GM12878 (cell line): ENCODE measurements at regions of chr9 and their contacts with region 1.

Region 1: DNA sequence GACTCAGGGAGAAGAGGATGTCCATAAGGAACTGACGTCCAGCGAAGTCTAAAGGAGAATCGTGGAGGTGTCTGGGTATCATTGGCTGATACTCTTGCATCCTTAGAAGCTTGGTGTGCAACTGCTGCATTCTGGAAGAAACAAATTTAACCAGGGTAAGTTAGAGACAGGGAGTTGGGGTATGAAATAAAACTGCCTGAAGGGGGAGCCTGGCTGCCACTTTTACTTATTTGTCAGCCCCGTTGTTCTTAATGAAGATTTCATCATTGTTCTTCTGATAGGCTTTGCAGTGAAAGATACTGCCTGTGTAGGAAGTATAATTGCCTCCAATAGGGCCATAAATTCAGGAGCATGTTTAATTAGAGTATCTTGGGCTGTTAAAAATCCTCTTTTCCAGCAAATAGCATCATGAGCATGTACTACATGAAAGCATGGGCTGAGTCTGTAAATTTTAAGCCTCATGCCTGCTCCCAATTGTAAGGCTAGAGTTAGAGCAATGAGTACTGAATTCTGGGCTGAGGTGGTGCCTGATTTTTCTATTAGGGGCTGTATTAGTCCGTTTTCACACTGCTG is 1264.5 kb upstream of the ACO1 start:
- DNase-seq: no peak
- ATAC-seq: peak; percentile 78
- H3K4me3 ChIP-seq: no peak overlapping the region
- H3K27ac ChIP-seq: no peak overlapping the region
- H3K4me1 ChIP-seq: no peaks in the 10 kb centered on the region
- H3K27me3 ChIP-seq: no peaks in the 10 kb centered on the region
- CTCF ChIP-seq: peak; percentile 52 to 70 (median 52)
- EP300 ChIP-seq: no peak
- POLR2A ChIP-seq: no peak
- RAD21 ChIP-seq: peak; percentile 81

Region 2: GRCh38 chr9:31542384-31543055 is 422.6 kb after region 1 on chr9:
- CTCF ChIA-PET with region 1: interaction called, 5 read pairs
- POLR2A ChIA-PET with region 1: no interaction called
- RAD21 ChIA-PET with region 1: interaction called, 4 read pairs
- SMC1A ChIA-PET with region 1: interaction called, 3 read pairs
- in situ Hi-C with region 1: no loop called
- intact Hi-C with region 1: loop called (anchors 10 kb)
- DNase-seq: peak; percentile 26
- ATAC-seq: peak; percentile 99
- H3K4me3 ChIP-seq: no peak overlapping the region
- H3K27ac ChIP-seq: no peak overlapping the region
- H3K4me1 ChIP-seq: peaks cover 4% of the 10 kb centered on the region; the same call in 1 of the 2 replicates
- H3K27me3 ChIP-seq: no peaks in the 10 kb centered on the region
- CTCF ChIP-seq: peak; percentile 54 to 57 (median 56); a peak in 5 of 6 replicates
- EP300 ChIP-seq: peak; percentile 37 to 78; a peak in 2 of 4 replicates
- POLR2A ChIP-seq: no peak
- RAD21 ChIP-seq: peak; percentile 75

Region 3: DNA sequence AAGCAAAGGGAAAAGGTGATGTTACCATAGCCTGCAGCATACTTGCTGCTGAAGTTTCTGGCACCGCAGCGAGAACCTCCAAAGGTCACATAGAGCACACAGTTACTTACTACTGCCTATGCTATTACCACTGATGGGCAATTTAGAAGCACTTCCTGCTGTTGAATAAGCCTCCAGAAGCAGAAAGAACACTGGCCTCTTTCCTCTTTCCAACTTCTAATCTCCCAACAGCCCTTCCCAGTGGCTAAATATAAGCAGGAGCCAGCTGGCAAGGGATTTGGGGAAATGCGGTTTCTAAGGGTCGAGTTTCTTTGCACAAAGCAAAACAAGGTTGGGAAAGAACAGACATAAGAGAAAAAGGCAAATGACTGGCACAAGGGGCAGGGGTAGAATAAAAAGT is 595.3 kb after region 1 on chr9:
- CTCF ChIA-PET with region 1: no interaction called
- POLR2A ChIA-PET with region 1: no interaction called
- RAD21 ChIA-PET with region 1: no interaction called
- SMC1A ChIA-PET with region 1: no interaction called
- in situ Hi-C with region 1: no loop called
- intact Hi-C with region 1: no loop called
- DNase-seq: no peak
- ATAC-seq: no peak
- H3K4me3 ChIP-seq: no peak overlapping the region
- H3K27ac ChIP-seq: no peak overlapping the region
- H3K4me1 ChIP-seq: no peaks in the 10 kb centered on the region
- H3K27me3 ChIP-seq: no peaks in the 10 kb centered on the region
- CTCF ChIP-seq: no peak
- EP300 ChIP-seq: no peak
- POLR2A ChIP-seq: no peak
- RAD21 ChIP-seq: no peak

Region 4: GRCh38 chr9:31799953-31800609 is 680.1 kb after region 1 on chr9:
- CTCF ChIA-PET with region 1: no interaction called
- POLR2A ChIA-PET with region 1: no interaction called
- RAD21 ChIA-PET with region 1: no interaction called
- SMC1A ChIA-PET with region 1: no interaction called
- in situ Hi-C with region 1: no loop called
- intact Hi-C with region 1: loop called (anchors 1 kb)
- DNase-seq: peak; percentile 4
- ATAC-seq: no peak
- H3K4me3 ChIP-seq: no peak overlapping the region
- H3K27ac ChIP-seq: no peak overlapping the region
- H3K4me1 ChIP-seq: no peaks in the 10 kb centered on the region
- H3K27me3 ChIP-seq: no peaks in the 10 kb centered on the region
- CTCF ChIP-seq: peak; percentile 25 to 61 (median 44); a peak in 5 of 6 replicates
- EP300 ChIP-seq: no peak
- POLR2A ChIP-seq: no peak
- RAD21 ChIP-seq: peak; percentile 84